Mammary epithelial cell (primary cell): ENCODE measurements at regions of chr14 and their contacts with region 1.

Region 1: GRCh38 chr14:61388173-61388975 is 67.0 kb downstream of the PRKCH start:
- DNase-seq: peak; percentile 94
- H3K4me3 ChIP-seq: no peak overlapping the region
- H3K27ac ChIP-seq: peak overlapping the region; percentile 94
- H3K4me1 ChIP-seq: peaks cover 25% of the 10 kb centered on the region
- H3K27me3 ChIP-seq: no peaks in the 10 kb centered on the region
- CTCF ChIP-seq: no peak

Region 2: GRCh38 chr14:61335671-61336275 is 52.6 kb before region 1 on chr14:
- CTCF ChIA-PET with region 1: interaction called, 11 read pairs
- dilution Hi-C with region 1: no loop called
- in situ Hi-C with region 1: no loop called
- intact Hi-C with region 1: no loop called
- DNase-seq: no peak
- H3K4me3 ChIP-seq: no peak overlapping the region
- H3K27ac ChIP-seq: no peak overlapping the region
- H3K4me1 ChIP-seq: peaks cover 3% of the 10 kb centered on the region
- H3K27me3 ChIP-seq: no peaks in the 10 kb centered on the region
- CTCF ChIP-seq: no peak